Activated CD4-positive, alpha-beta T cell treated with anti-CD3 and anti-CD28 coated beads for 36 hours (primary cell): ENCODE measurements at regions of chrX and their contacts with region 1.

Region 1: GRCh38 chrX:150486011-150486410 is 82.4 kb upstream of the MTM1 start:
- DNase-seq: peak; percentile 66
- ATAC-seq: peak; percentile 28
- H3K4me3 Mint-ChIP-seq: no peak overlapping the region
- H3K27ac Mint-ChIP-seq: no peak overlapping the region
- H3K4me1 Mint-ChIP-seq: peaks cover 26% of the 10 kb centered on the region
- H3K27me3 Mint-ChIP-seq: no peaks in the 10 kb centered on the region

Region 2: DNA sequence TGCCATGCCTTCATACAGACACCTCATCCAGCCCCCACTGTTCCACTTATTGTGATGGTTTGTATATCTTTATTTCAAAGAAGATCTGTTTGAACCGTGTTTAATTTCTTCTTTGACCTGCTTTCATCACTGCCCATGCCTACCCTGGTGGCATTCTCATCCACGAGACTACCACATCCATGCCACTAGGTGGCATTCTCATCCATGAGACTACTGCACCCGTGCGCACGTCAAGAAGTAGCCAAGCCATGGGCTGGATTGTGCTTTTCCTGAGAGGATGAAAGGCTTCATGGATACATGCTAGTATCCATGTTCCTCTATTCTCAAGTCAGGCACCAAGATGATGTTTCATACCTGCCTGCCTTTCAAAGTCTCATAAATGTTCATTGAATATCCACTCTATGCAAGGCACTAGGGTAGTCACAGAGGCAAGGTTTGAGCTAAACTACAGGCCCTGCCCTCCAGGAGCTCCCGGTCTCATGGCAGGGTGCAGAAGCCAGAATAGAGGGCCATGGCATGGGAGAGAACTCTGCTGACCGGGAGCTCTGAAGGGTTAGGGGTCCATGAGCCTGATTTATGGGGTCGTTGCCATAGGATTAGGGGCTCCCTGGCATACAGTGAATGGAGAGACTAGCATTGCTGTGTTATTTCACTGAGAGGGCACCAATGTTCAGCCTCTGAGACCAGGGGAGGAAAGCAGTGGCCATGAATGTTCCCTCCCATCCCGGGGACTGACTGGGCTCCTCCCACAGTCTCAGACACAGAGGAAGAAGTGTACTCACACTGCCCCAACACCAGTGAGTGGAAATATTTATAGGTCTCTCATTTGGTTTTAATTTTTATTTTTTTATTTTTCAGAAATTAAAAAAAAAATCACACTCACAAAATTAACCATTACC is 522.9 kb before region 1 on chrX:
- CTCF ChIA-PET with region 1: no interaction called
- POLR2A ChIA-PET with region 1: no interaction called
- intact Hi-C with region 1: loop called (anchors 5 to 10 kb)
- DNase-seq: peak; percentile 44
- ATAC-seq: peak; percentile 63
- H3K4me3 Mint-ChIP-seq: no peak overlapping the region
- H3K27ac Mint-ChIP-seq: no peak overlapping the region
- H3K4me1 Mint-ChIP-seq: peaks cover 4% of the 10 kb centered on the region
- H3K27me3 Mint-ChIP-seq: no peaks in the 10 kb centered on the region

Region 3: GRCh38 chrX:150200820-150201287 is 285.2 kb before region 1 on chrX:
- CTCF ChIA-PET with region 1: no interaction called
- POLR2A ChIA-PET with region 1: no interaction called
- intact Hi-C with region 1: loop called (anchors 2 to 10 kb)
- DNase-seq: peak; percentile 83
- ATAC-seq: peak; percentile 99
- H3K4me3 Mint-ChIP-seq: no peak overlapping the region
- H3K27ac Mint-ChIP-seq: no peak overlapping the region
- H3K4me1 Mint-ChIP-seq: peaks cover 10% of the 10 kb centered on the region
- H3K27me3 Mint-ChIP-seq: no peaks in the 10 kb centered on the region

Region 4: GRCh38 chrX:150449313-150449712 is 36.7 kb before region 1 on chrX:
- CTCF ChIA-PET with region 1: interaction called, 4 read pairs
- POLR2A ChIA-PET with region 1: no interaction called
- intact Hi-C with region 1: loop called in 1 of 2 experiments (anchors 2 kb)
- DNase-seq: no peak
- ATAC-seq: no peak
- H3K4me3 Mint-ChIP-seq: no peak overlapping the region
- H3K27ac Mint-ChIP-seq: no peak overlapping the region
- H3K4me1 Mint-ChIP-seq: peaks cover 16% of the 10 kb centered on the region
- H3K27me3 Mint-ChIP-seq: no peaks in the 10 kb centered on the region